ENCODE measurements at regions of chr16 and their contacts with region 1.

Region 1: GRCh38 chr16:68310761-68311511 is at the starts of genes PRMT7 and SLC7A6OS:
- DNase-seq: peak; percentile 96
- ATAC-seq: peak; percentile 99
- H3K4me3 Mint-ChIP-seq: peak within 1 kb of the TSS; percentile 85
- H3K27ac Mint-ChIP-seq: peak within 1 kb of the TSS; percentile 85
- H3K4me1 Mint-ChIP-seq: peaks cover 52% of the 10 kb centered on the region
- H3K27me3 Mint-ChIP-seq: no peaks in the 10 kb centered on the region
- total RNA-seq, gene PRMT7: 60.9 to 73.9 TPM
- total RNA-seq, gene SLC7A6OS: 29.8 to 30.8 TPM

Region 2: GRCh38 chr16:68298907-68299561 is 11.9 kb before region 1 on chr16:
- CTCF ChIA-PET with region 1: interaction called, 11 read pairs
- DNase-seq: no peak
- ATAC-seq: no peak
- H3K4me3 Mint-ChIP-seq: no peak overlapping the region
- H3K27ac Mint-ChIP-seq: peak overlapping the region; percentile 25
- H3K4me1 Mint-ChIP-seq: peaks cover 2% of the 10 kb centered on the region
- H3K27me3 Mint-ChIP-seq: no peaks in the 10 kb centered on the region

Region 3: DNA sequence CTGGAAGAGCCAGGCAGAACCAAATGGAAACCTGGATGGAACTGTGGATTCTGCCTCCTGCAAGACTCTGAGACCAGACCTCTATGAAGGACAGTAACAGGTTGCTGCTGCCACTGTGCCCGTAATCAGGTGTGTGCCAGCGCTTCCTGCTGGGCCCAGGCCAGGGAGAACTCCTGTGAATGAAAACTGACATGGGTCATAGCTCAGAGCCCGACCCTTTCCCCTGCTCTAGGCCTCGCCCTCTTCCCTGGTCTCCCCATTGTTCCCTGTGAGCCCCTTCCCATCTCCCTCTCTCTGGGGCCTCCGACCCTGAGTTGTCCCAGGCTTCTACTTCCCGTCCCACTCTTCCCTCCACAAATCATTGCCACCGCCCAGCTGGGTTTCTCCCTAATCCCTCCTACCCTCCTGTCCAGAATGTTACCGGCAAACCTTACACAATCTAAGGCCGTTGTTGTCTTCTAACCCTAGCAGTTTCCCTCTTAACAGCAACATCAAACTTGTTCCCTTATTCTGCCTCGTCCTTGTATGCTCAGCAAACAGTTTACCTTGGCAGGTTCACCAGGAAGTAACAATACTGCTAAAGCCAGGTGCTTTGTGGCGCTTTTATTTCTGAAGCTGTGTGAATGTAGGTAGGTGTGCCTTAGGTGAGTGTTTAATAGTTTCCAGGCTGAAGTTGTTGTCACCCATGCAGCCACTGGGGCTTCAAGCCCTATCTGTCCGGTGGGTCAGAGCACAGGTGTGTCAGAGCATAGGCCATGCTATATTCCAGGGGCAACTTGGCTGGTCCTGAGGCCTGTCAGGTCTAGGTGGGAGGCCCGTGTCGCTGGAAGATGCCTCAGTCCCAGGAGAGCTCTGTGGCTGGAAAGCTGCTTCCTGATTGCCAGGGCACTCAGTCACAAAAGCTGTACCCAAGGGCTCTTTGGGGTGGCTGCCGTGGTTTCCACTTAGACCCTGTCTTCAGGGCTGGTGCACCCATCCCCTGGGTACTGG is 105.4 kb after region 1 on chr16:
- CTCF ChIA-PET with region 1: no interaction called
- DNase-seq: no peak
- ATAC-seq: no peak
- H3K4me3 Mint-ChIP-seq: no peak overlapping the region
- H3K27ac Mint-ChIP-seq: no peak overlapping the region
- H3K4me1 Mint-ChIP-seq: peaks cover 29% of the 10 kb centered on the region
- H3K27me3 Mint-ChIP-seq: no peaks in the 10 kb centered on the region